Adrenal gland (tissue), 19 donors: ENCODE measurements at regions of chr20 and their contacts with region 1.

Region 1: DNA sequence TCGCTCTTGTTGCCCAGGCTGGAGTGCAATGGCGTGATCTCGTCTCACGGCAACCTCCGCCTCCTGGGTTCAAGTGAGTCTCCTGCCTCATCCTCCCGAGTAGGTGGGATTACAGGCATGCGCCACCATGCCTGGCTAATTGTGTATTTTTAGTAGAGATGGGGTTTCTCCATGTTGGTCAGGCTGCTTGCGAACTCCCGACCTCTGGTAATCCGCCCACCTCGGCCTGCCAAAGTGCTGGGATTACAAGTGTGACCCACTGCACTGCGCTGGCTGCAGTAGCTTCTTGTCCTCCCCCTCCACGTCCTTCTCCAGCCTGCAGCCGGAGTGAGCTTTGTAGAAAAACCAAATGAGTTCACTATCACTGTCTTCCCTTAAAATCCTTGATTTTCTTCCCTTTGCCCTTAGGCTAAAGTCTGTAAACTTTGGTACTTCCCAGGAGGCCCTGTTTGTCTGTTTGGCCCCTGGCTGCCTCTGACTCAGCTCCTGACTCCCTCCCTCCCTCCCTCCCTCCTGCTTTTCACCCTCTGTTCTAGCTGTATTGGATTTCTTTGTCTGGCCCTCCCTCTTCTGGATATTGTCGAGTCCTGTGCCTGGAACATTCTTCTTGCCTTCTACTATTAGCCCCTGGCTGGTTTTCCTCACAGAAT is 12.9 kb downstream of the PARD6B start:
- DNase-seq: peak; percentile 70 to 88 (median 85)
- H3K4me3 ChIP-seq: no peak overlapping the region
- H3K27ac ChIP-seq: peak overlapping the region; percentile 38 to 94 (median 81)
- H3K4me1 ChIP-seq: peaks cover 0 to 15% of the 10 kb centered on the region in 2 donors
- H3K27me3 ChIP-seq: no peaks in the 10 kb centered on the region
- CTCF ChIP-seq: peak in 5 of 6 experiments; percentile 17 to 44 (median 31)
- POLR2A ChIP-seq: no peak

Region 2: DNA sequence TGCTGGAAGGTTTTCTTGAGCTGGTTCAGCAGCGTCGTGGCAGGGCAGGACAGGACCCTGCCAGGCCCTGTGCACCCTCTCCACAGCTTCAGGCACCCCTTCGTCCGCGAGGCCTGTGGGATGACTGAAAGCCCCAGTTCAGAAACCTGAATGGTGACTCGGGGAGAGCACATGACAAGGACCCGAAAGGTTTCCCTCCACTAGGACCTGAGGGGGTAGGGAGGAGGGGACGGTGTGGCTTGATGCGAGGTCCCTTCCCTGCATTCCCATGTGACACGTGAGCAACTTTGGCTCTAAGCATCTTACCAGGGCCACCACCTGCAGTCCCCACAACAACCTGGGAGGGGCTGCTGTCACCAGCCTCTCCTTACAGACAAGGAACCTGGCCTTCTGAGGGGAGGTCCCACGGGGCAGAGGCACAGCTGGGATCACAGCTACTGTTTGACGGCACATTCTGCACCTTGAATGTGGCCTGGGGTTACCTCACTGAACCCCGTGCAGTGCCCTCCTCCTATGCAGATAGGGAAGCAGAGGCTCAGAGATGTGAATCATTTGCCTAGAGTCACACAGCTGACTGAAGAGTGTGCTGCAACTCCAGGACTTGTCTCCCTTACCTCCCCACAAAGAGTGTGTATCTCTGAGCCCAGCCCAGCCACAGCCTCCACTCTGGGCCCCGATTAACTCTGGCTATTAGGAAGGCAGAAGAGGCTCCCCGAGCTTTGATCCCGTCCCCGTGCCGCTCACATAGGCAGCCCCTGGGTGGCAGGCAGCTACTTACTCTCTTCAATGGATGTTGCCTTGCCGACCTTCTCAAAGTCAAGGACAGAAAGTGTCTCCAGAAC is 149.5 kb before region 1 on chr20:
- intact Hi-C with region 1: loop called in 1 of 2 experiments (anchors 10 kb)
- DNase-seq: no peak
- H3K4me3 ChIP-seq: no peak overlapping the region
- H3K27ac ChIP-seq: no peak overlapping the region
- H3K4me1 ChIP-seq: peaks cover 9 to 31% of the 10 kb centered on the region in 2 donors
- H3K27me3 ChIP-seq: no peaks in the 10 kb centered on the region
- CTCF ChIP-seq: peak in 1 of 6 experiments; percentile 8
- POLR2A ChIP-seq: no peak